ENCODE measurements at regions of chr18 and their contacts with region 1.

Region 1: GRCh38 chr18:11925800-11926481 is 17.8 kb upstream of the MPPE1 start:
- DNase-seq: no peak
- H3K4me3 Mint-ChIP-seq: no peak overlapping the region
- H3K27ac Mint-ChIP-seq: no peak overlapping the region
- H3K4me1 Mint-ChIP-seq: peaks cover 15% of the 10 kb centered on the region
- H3K27me3 Mint-ChIP-seq: no peaks in the 10 kb centered on the region

Region 2: DNA sequence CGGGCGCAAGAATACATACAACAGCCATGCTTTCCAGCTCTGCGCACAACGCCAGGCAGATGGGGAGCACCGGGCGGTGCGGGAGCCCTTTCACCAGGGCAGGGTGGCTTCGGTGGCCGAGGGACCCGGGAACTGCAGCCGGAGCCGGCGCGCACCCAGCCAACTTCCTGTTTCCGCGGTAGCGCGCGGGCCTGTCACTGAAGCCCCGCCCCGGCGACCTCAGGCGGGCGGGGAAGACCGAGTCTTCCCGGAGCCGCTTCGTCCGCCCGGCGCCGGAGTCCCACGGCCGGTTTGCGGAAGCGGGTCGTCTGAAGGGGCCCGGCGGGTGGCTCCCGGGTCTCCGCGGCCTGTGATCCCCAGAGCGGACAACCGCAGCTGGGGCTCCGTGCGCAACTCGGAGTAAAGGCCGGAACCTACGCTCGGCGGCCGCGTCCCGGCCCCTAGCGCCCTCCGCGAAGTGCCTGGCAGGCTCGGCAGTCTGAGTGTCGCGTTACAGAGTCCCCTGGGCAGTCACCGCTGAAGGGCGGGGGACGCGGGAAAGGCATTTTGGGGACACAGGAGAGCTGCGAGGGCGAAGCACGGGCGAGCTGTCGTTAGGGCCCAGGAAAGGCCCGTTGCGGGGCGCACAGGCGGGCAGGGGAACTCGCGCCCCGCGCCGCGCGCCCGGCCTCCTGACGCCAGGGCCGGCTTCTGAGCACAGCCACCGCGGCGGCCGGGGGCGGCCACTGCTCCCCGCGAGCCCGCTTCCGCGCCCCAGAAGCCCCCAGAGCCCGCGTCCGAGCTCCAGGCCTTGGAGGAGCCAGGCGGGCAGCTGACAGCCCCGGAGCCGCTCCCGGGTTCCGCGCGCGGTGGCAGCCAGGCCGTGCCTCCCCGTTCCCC is 17.5 kb before region 1 on chr18 and contains the start of gene MPPE1:
- CTCF ChIA-PET with region 1: no interaction called
- POLR2A ChIA-PET with region 1: interaction called, 13 read pairs
- DNase-seq: peak; percentile 89
- H3K4me3 Mint-ChIP-seq: peak within 1 kb of the TSS; percentile 86
- H3K27ac Mint-ChIP-seq: peak within 1 kb of the TSS; percentile 89
- H3K4me1 Mint-ChIP-seq: peaks cover 26% of the 10 kb centered on the region
- H3K27me3 Mint-ChIP-seq: no peaks in the 10 kb centered on the region
- total RNA-seq, gene MPPE1: 51.0 to 54.4 TPM

Region 3: GRCh38 chr18:11937874-11938478 is 12.0 kb after region 1 on chr18:
- CTCF ChIA-PET with region 1: interaction called, 32 read pairs
- POLR2A ChIA-PET with region 1: no interaction called
- DNase-seq: peak; percentile 76
- H3K4me3 Mint-ChIP-seq: no peak overlapping the region
- H3K27ac Mint-ChIP-seq: no peak overlapping the region
- H3K4me1 Mint-ChIP-seq: no peaks in the 10 kb centered on the region
- H3K27me3 Mint-ChIP-seq: no peaks in the 10 kb centered on the region

Region 4: DNA sequence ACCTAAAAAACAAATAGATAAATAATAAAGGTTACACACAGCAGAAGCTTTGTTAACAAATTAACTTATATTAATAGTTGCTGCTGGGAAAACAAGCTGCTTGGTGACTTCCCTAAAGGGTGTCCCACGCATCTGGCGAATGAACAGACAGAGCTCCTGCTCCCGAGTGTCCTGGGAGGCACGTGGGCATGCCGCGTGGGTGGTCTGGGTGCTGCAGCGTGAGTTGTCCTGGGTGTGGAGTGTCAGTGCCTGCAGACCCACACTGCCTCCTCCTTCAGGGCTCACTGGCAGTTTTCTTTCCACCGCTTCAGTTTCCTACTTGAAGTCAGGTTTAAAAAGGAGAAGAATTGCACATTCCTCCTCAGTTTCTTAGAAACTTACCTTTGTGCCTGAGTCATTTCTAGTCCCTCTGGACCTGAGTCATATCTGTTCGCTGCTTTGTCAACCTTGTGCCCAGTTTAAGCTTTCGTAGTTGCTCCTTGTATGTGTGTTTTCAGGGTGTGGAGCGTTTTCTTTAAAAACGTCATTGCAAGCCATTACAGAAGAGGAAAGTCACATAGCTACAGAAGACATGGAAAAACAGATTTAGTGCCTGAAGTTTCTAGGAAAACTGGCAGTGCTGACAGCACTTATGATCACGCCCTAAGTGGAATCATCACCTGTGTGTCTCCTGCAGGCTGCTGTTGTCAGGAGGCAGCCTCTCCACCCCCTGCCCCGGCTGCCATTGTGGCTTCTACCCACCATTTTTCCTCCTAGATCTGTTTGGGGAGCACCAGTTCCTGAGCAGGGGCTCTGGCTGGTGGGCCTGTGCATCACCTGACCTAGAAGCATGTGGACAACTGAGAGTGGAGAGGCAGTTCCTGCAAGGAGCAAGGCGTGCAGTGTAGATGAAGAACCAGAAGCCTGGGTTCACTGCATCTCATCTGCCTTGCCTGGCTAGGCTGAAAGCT is 79.9 kb after region 1 on chr18:
- CTCF ChIA-PET with region 1: no interaction called
- POLR2A ChIA-PET with region 1: no interaction called
- DNase-seq: no peak
- H3K4me3 Mint-ChIP-seq: no peak overlapping the region
- H3K27ac Mint-ChIP-seq: no peak overlapping the region
- H3K4me1 Mint-ChIP-seq: peaks cover 9% of the 10 kb centered on the region
- H3K27me3 Mint-ChIP-seq: no peaks in the 10 kb centered on the region

Measured in activated CD4-positive, alpha-beta memory T cell treated with anti-CD3 and anti-CD28 coated beads, Interleukin-2, amount 10 ng/mL, durations not matched to agents 7 days and 5 days (primary cell).